Endothelial cell of umbilical vein (primary cell): ENCODE measurements at regions of chr4 and their contacts with region 1.

Region 1: GRCh38 chr4:74228691-74229640 is 71.0 kb downstream of the MTHFD2L start:
- DNase-seq: peak; percentile 74
- H3K4me3 ChIP-seq: no peak overlapping the region
- H3K27ac ChIP-seq: no peak overlapping the region
- H3K4me1 ChIP-seq: peaks cover 23% of the 10 kb centered on the region
- H3K27me3 ChIP-seq: no peaks in the 10 kb centered on the region
- CTCF ChIP-seq: peak; percentile 86 to 95
- POLR2A ChIP-seq: no peak

Region 2: GRCh38 chr4:74157561-74158465 is 71.2 kb before region 1 on chr4 and contains the start of gene MTHFD2L:
- CTCF ChIA-PET with region 1: interaction called, 5 read pairs
- POLR2A ChIA-PET with region 1: no interaction called
- dilution Hi-C with region 1: no loop called
- intact Hi-C with region 1: loop called (anchors 2 kb)
- DNase-seq: peak; percentile 96
- H3K4me3 ChIP-seq: peak within 1 kb of the TSS; percentile 73 to 97 (median 76)
- H3K27ac ChIP-seq: peak within 1 kb of the TSS; percentile 90
- H3K4me1 ChIP-seq: peaks cover 29% of the 10 kb centered on the region
- H3K27me3 ChIP-seq: no peaks in the 10 kb centered on the region
- CTCF ChIP-seq: no peak
- POLR2A ChIP-seq: peak; percentile 88
- total RNA-seq, gene MTHFD2L: 12.4 and 15.2 TPM in 2 replicates

Region 3: GRCh38 chr4:74189331-74190043 is 39.5 kb before region 1 on chr4:
- CTCF ChIA-PET with region 1: interaction called, 51 read pairs
- POLR2A ChIA-PET with region 1: no interaction called
- dilution Hi-C with region 1: no loop called
- intact Hi-C with region 1: loop called (anchors 1 kb)
- DNase-seq: peak; percentile 66
- H3K4me3 ChIP-seq: no peak overlapping the region
- H3K27ac ChIP-seq: no peak overlapping the region
- H3K4me1 ChIP-seq: no peaks in the 10 kb centered on the region
- H3K27me3 ChIP-seq: no peaks in the 10 kb centered on the region
- CTCF ChIP-seq: peak; percentile 37 to 63
- POLR2A ChIP-seq: no peak

Region 4: GRCh38 chr4:74217365-74217764 is 11.6 kb before region 1 on chr4:
- CTCF ChIA-PET with region 1: interaction called, 20 read pairs
- POLR2A ChIA-PET with region 1: no interaction called
- dilution Hi-C with region 1: no loop called
- intact Hi-C with region 1: no loop called
- DNase-seq: peak; percentile 61
- H3K4me3 ChIP-seq: no peak overlapping the region
- H3K27ac ChIP-seq: peak overlapping the region; percentile 42
- H3K4me1 ChIP-seq: peaks cover 4% of the 10 kb centered on the region
- H3K27me3 ChIP-seq: no peaks in the 10 kb centered on the region
- CTCF ChIP-seq: no peak
- POLR2A ChIP-seq: no peak

Region 5: DNA sequence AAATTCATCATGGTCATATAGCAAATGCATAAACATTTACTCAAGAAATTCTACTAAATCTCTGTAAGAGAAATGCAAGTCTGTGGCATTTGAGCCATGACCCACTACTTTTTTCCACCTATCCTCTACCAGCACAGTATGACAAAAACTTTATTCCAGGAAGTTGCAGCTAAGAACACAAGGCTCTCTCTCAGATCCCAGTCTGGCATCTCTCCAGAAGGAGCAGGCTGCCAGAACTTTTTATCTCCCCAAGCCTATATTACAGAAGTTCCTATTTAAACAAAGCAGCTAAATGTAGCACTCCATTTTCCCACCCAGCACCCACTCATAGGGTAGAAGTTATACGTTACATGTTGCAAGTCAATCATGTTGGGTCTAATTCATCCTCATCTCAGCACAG is 30.0 kb after region 1 on chr4:
- CTCF ChIA-PET with region 1: interaction called, 11 read pairs
- POLR2A ChIA-PET with region 1: no interaction called
- dilution Hi-C with region 1: no loop called
- intact Hi-C with region 1: no loop called
- DNase-seq: peak; percentile 46
- H3K4me3 ChIP-seq: no peak overlapping the region
- H3K27ac ChIP-seq: no peak overlapping the region
- H3K4me1 ChIP-seq: no peaks in the 10 kb centered on the region
- H3K27me3 ChIP-seq: no peaks in the 10 kb centered on the region
- CTCF ChIP-seq: no peak
- POLR2A ChIP-seq: no peak

Region 6: DNA sequence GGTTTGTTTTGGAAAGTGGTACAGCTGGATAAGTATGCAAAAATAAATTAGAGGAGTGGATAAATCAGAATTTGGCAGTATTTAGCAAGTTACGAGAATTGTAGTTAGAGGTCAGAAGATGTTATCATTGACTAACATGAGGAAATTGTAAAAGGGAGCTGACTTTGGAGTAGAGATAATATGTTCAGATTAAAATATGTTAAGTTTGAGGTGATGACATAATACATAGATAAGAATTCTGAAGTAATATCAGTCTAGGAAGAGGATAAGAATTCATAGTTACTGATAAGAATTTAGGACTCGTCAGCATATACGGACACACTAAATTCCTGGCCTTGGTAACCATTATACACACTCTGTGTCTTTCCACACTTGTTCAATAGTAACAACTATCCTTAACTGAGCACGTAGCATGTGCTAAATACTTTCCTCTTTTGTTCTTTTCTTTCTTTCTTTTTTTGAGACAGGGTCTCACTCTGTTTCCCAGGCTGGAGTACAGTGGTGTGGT is 75.2 kb after region 1 on chr4:
- CTCF ChIA-PET with region 1: interaction called, 39 read pairs
- POLR2A ChIA-PET with region 1: no interaction called
- dilution Hi-C with region 1: no loop called
- intact Hi-C with region 1: no loop called
- DNase-seq: no peak
- H3K4me3 ChIP-seq: no peak overlapping the region
- H3K27ac ChIP-seq: no peak overlapping the region
- H3K4me1 ChIP-seq: no peaks in the 10 kb centered on the region
- H3K27me3 ChIP-seq: no peaks in the 10 kb centered on the region
- CTCF ChIP-seq: no peak
- POLR2A ChIP-seq: no peak

Region 7: GRCh38 chr4:74311696-74312313 is 82.8 kb after region 1 on chr4:
- CTCF ChIA-PET with region 1: interaction called, 61 read pairs
- POLR2A ChIA-PET with region 1: no interaction called
- dilution Hi-C with region 1: no loop called
- intact Hi-C with region 1: loop called (anchors 1 kb)
- DNase-seq: peak; percentile 70
- H3K4me3 ChIP-seq: no peak overlapping the region
- H3K27ac ChIP-seq: no peak overlapping the region
- H3K4me1 ChIP-seq: no peaks in the 10 kb centered on the region
- H3K27me3 ChIP-seq: no peaks in the 10 kb centered on the region
- CTCF ChIP-seq: peak; percentile 47 to 60
- POLR2A ChIP-seq: no peak